ENCODE measurements at regions of chr18 and their contacts with region 1.

Region 1: GRCh38 chr18:8704361-8705279 is 736 bp upstream of the MTCL1 start:
- DNase-seq: peak; percentile 90
- ATAC-seq: peak; percentile 90
- H3K4me3 ChIP-seq: peak overlapping the region; percentile 43 to 89 (median 64)
- H3K4me3 Mint-ChIP-seq: peak overlapping the region; percentile 96
- H3K27ac ChIP-seq: peak overlapping the region; percentile 35 to 40
- H3K27ac Mint-ChIP-seq: peak overlapping the region; percentile 88
- H3K4me1 ChIP-seq: peaks cover 22 to 27% of the 10 kb centered on the region in 2 donors
- H3K4me1 Mint-ChIP-seq: peaks cover 27% of the 10 kb centered on the region
- H3K27me3 ChIP-seq: peaks cover 0 to 38% (median 19%) of the 10 kb centered on the region in 4 experiments
- H3K27me3 Mint-ChIP-seq: peaks cover 30% of the 10 kb centered on the region
- CTCF ChIP-seq: no peak

Region 2: GRCh38 chr18:8435376-8435775 is 269.2 kb before region 1 on chr18:
- CTCF ChIA-PET with region 1: no interaction called
- POLR2A ChIA-PET with region 1: no interaction called
- intact Hi-C with region 1: no loop called
- DNase-seq: no peak
- ATAC-seq: no peak
- H3K4me3 ChIP-seq: no peak overlapping the region
- H3K4me3 Mint-ChIP-seq: no peak overlapping the region
- H3K27ac ChIP-seq: no peak overlapping the region
- H3K27ac Mint-ChIP-seq: no peak overlapping the region
- H3K4me1 ChIP-seq: no peaks in the 10 kb centered on the region
- H3K4me1 Mint-ChIP-seq: no peaks in the 10 kb centered on the region
- H3K27me3 ChIP-seq: no peaks in the 10 kb centered on the region
- H3K27me3 Mint-ChIP-seq: no peaks in the 10 kb centered on the region
- CTCF ChIP-seq: no peak

Region 3: DNA sequence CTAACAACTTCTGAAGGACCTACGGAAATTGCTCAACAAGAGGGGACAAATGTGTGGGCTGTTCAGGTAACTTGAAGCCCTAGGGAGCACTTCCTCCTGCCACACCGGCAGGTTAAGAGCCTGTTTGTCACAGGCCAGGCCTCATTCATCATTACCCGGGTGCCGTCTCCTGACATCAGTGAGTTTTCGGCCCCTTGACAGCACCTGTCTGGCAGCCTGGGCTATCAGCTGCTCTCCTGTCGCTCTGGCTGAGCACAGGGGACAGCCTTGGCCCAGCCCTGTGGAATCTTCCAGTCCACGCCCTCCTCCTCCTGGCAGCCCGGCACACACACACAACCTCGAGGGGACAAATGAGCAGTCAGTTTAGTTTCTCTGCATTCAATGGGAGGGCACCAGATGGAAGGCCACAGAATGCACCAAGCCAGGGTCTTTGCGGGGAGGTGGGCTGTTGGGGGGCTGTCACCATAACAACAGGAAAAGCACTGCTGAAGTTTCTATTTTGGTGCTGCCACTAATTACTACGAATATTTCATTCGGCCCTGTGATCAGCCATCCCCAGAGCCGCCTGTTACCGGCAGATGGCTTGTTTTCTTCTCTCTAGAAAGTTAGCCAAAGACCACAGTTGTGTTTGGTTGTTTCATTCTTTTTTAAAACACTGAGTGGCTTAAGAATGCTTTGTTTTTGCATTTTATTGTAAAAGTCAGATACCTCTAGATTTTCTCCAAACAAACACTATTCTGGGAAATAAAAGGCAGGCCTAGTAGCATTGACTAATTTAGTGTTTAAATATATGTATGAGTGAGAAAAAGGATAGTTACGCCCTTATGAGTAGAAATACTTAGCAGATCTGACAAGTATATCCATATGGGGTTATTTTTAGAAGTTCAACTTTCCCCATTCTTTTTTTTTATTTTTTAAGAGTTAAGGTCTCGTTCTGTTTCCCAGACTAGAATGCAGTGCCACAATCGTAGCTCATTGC is 208.0 kb after region 1 on chr18:
- CTCF ChIA-PET with region 1: no interaction called
- POLR2A ChIA-PET with region 1: no interaction called
- intact Hi-C with region 1: loop called (anchors 2 kb)
- DNase-seq: peak; percentile 81
- ATAC-seq: peak; percentile 64
- H3K4me3 ChIP-seq: peak overlapping the region in 2 of 5 experiments; percentile 17 to 33
- H3K4me3 Mint-ChIP-seq: peak overlapping the region; percentile 88
- H3K27ac ChIP-seq: peak overlapping the region; percentile 96 to 98
- H3K27ac Mint-ChIP-seq: peak overlapping the region; percentile 99
- H3K4me1 ChIP-seq: peaks cover 51 to 54% of the 10 kb centered on the region in 2 donors
- H3K4me1 Mint-ChIP-seq: peaks cover 68% of the 10 kb centered on the region
- H3K27me3 ChIP-seq: no peaks in the 10 kb centered on the region
- H3K27me3 Mint-ChIP-seq: no peaks in the 10 kb centered on the region
- CTCF ChIP-seq: no peak

Region 4: DNA sequence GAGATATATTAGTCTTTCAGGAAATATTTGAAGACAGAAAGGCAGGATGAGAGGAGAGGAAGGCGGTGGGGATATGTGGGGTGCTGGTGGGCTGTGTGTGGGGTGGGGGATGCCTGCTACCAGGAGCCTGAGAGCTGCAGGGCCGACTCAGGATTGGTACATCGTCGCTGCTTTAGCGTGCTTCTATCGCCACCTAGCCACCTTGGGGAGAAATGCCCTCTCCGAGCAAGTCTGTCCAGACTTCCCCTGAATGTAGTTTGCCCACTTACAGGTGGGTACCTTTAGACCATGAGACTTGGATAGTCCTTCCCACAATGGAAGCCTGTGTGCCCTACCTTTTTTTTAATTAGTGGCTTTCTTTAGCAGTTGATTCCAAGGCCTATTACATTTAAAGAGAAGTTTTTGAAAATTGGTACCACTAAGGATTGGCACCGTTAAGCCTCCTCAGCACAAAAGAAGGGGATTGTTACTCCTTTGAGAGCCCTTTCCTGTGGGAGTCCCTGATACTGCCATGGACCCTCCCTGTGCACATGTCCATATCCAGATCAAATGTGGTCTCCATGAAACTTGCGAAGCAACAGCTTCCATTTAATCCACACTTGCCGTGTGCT is 283.7 kb after region 1 on chr18:
- CTCF ChIA-PET with region 1: interaction called, 21 read pairs
- POLR2A ChIA-PET with region 1: no interaction called
- intact Hi-C with region 1: no loop called
- DNase-seq: peak; percentile 76
- ATAC-seq: peak; percentile 79
- H3K4me3 ChIP-seq: no peak overlapping the region
- H3K4me3 Mint-ChIP-seq: no peak overlapping the region
- H3K27ac ChIP-seq: no peak overlapping the region
- H3K27ac Mint-ChIP-seq: no peak overlapping the region
- H3K4me1 ChIP-seq: no peaks in the 10 kb centered on the region
- H3K4me1 Mint-ChIP-seq: no peaks in the 10 kb centered on the region
- H3K27me3 ChIP-seq: no peaks in the 10 kb centered on the region
- H3K27me3 Mint-ChIP-seq: peaks cover 7% of the 10 kb centered on the region
- CTCF ChIP-seq: peak; percentile 89

Region 5: GRCh38 chr18:9334329-9334972 is 629.8 kb after region 1 on chr18 and contains the start of gene TWSG1:
- CTCF ChIA-PET with region 1: no interaction called
- POLR2A ChIA-PET with region 1: no interaction called
- intact Hi-C with region 1: loop called (anchors 2 kb)
- DNase-seq: peak; percentile 94
- ATAC-seq: peak; percentile 93
- H3K4me3 ChIP-seq: peak within 1 kb of the TSS; percentile 59 to 88 (median 71)
- H3K4me3 Mint-ChIP-seq: peak within 1 kb of the TSS; percentile 95
- H3K27ac ChIP-seq: peak within 1 kb of the TSS in 1 of 2 donors; percentile 65
- H3K27ac Mint-ChIP-seq: peak within 1 kb of the TSS; percentile 82
- H3K4me1 ChIP-seq: peaks cover 6 to 19% of the 10 kb centered on the region in 2 donors
- H3K4me1 Mint-ChIP-seq: peaks cover 20% of the 10 kb centered on the region
- H3K27me3 ChIP-seq: peaks cover 0 to 2% (median 0%) of the 10 kb centered on the region in 4 experiments
- H3K27me3 Mint-ChIP-seq: peaks cover 3% of the 10 kb centered on the region
- CTCF ChIP-seq: peak; percentile 44
- total RNA-seq, gene TWSG1: 5.5 and 6.3 TPM in 2 replicates

Region 6: DNA sequence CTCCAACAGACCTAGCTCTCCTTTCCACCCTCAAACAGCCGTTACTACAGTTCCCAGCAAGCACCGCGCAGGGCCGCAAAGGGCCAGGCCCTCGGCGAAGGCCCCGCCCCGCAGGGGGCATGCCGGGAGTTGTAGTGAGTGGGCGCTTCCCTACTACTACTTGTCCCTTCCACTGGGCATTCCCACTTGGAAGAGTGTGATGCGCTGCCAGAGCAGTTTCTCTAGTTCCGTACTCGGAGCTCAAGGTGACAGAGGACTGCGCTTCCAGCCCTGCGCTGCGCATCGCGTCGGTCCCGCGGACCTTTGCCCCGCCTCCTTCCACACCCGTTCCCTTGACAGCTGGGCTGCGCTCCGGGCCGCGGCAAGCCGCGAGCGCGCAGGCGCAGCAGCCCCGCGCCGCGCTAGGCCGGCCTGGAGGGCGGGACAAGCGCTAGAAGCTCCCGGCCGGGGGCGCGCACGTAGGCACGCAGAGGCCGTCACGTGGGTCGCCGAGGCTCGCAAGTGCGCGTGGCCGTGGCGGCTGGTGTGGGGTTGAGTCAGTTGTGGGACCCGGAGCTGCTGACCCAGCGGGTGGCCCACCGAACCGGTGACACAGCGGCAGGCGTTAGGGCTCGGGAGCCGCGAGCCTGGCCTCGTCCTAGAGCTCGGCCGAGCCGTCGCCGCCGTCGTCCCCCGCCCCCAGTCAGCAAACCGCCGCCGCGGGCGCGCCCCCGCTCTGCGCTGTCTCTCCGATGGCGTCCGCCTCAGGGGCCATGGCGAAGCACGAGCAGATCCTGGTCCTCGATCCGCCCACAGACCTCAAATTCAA is 1209.1 kb after region 1 on chr18 and contains the start of gene VAPA:
- CTCF ChIA-PET with region 1: no interaction called
- POLR2A ChIA-PET with region 1: no interaction called
- intact Hi-C with region 1: loop called (anchors 5 kb)
- DNase-seq: peak; percentile 99
- ATAC-seq: peak; percentile 80
- H3K4me3 ChIP-seq: peak within 1 kb of the TSS; percentile 78 to 90 (median 89)
- H3K4me3 Mint-ChIP-seq: peak within 1 kb of the TSS; percentile 94
- H3K27ac ChIP-seq: peak within 1 kb of the TSS; percentile 89 to 95
- H3K27ac Mint-ChIP-seq: peak within 1 kb of the TSS; percentile 96
- H3K4me1 ChIP-seq: peaks cover 30 to 35% of the 10 kb centered on the region in 2 donors
- H3K4me1 Mint-ChIP-seq: peaks cover 26% of the 10 kb centered on the region
- H3K27me3 ChIP-seq: peaks cover 0 to 4% (median 2%) of the 10 kb centered on the region in 4 experiments
- H3K27me3 Mint-ChIP-seq: peaks cover 9% of the 10 kb centered on the region
- CTCF ChIP-seq: no peak
- total RNA-seq, gene VAPA: 109 and 117 TPM in 2 replicates

Measured in B cell (primary cell).